Activated B cell treated with CpG ODN at 0.5 μM for 24 hours (primary cell): ENCODE measurements at regions of chr3 and their contacts with region 1.

Region 1: DNA sequence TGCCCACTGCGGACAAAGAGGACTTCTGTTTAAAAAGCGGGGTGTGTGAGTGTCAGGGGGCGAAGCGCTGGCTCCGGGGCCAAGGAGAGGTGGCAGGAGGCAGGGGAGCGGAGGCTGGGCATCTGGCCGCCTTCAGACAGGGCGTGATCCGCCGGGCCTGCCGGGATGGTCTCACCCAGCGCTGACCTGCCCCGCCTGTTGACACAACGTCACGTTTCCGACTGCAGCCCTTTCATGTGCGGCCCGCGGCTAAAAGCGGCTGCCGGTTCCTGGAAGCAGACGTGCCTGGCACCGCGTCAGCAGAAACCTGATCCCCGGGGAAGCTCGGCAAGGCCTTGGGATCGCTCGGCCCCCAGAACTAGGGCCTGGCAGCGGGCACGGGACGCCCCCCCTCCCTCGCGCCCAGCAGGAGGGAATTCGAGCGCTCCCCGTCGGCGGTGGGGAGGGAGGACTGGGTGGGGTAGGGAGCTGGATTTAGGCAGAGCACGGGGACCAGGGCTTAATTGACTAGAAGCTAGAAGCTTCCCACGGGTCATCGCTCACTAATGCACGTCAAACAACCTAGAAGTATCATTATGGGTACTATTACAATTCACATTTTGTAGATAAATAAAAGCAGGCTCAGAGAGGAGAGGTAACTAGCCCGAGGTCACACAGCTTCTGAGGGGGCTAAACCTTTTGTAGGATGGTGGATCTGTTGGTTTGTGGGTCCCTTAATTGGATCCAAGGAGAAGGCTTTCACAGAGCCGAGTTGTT is 7.7 kb downstream of the BHLHE40 start:
- DNase-seq: peak; percentile 64
- ATAC-seq: peak; percentile 33
- H3K4me3 Mint-ChIP-seq: peak overlapping the region; percentile 83
- H3K27ac Mint-ChIP-seq: peak overlapping the region; percentile 76
- H3K4me1 Mint-ChIP-seq: peaks cover 76% of the 10 kb centered on the region
- H3K27me3 Mint-ChIP-seq: no peaks in the 10 kb centered on the region
- CTCF ChIP-seq: no peak

Region 2: GRCh38 chr3:4303187-4304123 is 683.5 kb before region 1 on chr3 and contains the start of gene SETMAR:
- CTCF ChIA-PET with region 1: no interaction called
- POLR2A ChIA-PET with region 1: no interaction called
- intact Hi-C with region 1: loop called (anchors 10 kb)
- DNase-seq: peak; percentile 77
- ATAC-seq: peak; percentile 96
- H3K4me3 Mint-ChIP-seq: peak within 1 kb of the TSS; percentile 98
- H3K27ac Mint-ChIP-seq: peak within 1 kb of the TSS; percentile 98
- H3K4me1 Mint-ChIP-seq: peaks cover 11% of the 10 kb centered on the region
- H3K27me3 Mint-ChIP-seq: no peaks in the 10 kb centered on the region
- CTCF ChIP-seq: no peak
- total RNA-seq, gene SETMAR: 10.3 and 11.4 TPM in 2 replicates

Region 3: DNA sequence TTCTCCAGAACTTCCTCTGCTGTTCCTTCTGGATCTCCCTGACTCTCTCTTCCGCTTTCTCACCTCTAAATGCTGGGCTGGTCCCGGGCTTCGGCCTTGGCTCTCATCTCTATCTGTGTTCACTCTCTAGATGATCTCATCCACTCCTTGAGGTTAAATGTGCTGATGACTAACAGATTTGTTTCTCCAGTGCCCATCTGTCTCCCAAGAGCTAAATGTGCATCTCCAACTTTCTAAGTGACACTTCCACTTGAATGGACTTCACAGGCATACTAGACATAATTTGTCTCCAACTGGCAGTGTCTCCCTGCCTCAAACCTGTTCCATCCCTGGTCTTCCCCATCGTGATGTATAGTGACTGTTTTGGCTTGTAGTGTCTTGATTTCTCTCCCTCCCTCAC is 398.5 kb before region 1 on chr3:
- CTCF ChIA-PET with region 1: no interaction called
- POLR2A ChIA-PET with region 1: no interaction called
- intact Hi-C with region 1: no loop called
- DNase-seq: no peak
- ATAC-seq: no peak
- H3K4me3 Mint-ChIP-seq: no peak overlapping the region
- H3K27ac Mint-ChIP-seq: peak overlapping the region; percentile 36
- H3K4me1 Mint-ChIP-seq: peaks cover 82% of the 10 kb centered on the region
- H3K27me3 Mint-ChIP-seq: no peaks in the 10 kb centered on the region
- CTCF ChIP-seq: no peak

Region 4: GRCh38 chr3:4845882-4846281 is 141.1 kb before region 1 on chr3:
- CTCF ChIA-PET with region 1: interaction called, 3 read pairs
- POLR2A ChIA-PET with region 1: interaction called, 14 read pairs
- intact Hi-C with region 1: no loop called
- DNase-seq: no peak
- ATAC-seq: peak; percentile 66
- H3K4me3 Mint-ChIP-seq: peak overlapping the region; percentile 16
- H3K27ac Mint-ChIP-seq: peak overlapping the region; percentile 69
- H3K4me1 Mint-ChIP-seq: peaks cover 72% of the 10 kb centered on the region
- H3K27me3 Mint-ChIP-seq: no peaks in the 10 kb centered on the region
- CTCF ChIP-seq: no peak

Region 5: DNA sequence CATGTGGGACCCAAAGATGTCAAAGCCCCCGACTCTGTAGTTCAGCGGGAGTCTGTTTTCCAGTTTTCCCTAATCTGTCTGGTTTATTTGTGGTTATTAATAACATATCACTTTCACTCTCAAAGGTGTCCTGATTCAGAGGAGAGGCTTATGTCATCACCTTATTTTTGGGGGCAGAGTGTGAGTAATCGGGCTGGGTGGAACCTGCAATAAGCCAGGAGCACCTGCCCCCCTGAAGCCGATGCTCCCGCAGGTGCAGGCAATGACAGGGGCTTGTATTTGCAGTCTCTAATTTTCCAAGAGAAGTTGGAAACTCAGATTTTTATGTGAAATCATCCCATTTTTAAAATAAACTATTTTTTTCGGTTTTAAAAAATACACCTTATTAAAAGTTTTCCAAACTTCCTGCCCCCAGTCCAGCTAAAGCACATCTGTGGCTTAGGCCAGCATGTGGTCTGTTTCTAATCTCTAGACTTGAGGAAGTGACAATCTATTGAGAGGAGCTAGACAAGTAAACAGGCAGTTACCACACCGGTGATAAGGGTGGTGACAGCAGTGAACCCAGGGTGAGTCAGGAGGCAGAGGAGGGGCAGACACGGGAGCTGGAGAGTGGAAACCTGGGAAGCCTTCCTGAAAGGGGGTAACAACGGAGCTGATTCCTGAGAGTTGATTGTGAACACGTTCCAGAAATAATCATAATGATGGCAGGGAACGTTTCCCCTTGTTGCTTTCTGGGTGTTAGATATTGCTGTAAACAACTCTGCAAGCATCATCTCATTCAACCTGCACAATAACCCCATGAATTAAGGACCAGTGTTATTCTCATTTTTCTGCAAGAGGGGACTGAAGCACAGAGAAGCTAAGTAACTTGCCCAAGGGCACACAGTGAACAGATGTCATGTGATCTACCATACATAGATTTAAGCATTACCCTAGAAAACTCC is 29.5 kb after region 1 on chr3:
- CTCF ChIA-PET with region 1: interaction called, 65 read pairs
- POLR2A ChIA-PET with region 1: interaction called, 478 read pairs
- intact Hi-C with region 1: loop called (anchors 1 kb)
- DNase-seq: no peak
- ATAC-seq: peak; percentile 18
- H3K4me3 Mint-ChIP-seq: peak overlapping the region; percentile 16
- H3K27ac Mint-ChIP-seq: peak overlapping the region; percentile 66
- H3K4me1 Mint-ChIP-seq: peaks cover 86% of the 10 kb centered on the region
- H3K27me3 Mint-ChIP-seq: no peaks in the 10 kb centered on the region
- CTCF ChIP-seq: no peak

Region 6: GRCh38 chr3:5057857-5058324 is 70.9 kb after region 1 on chr3:
- CTCF ChIA-PET with region 1: interaction called, 8 read pairs
- POLR2A ChIA-PET with region 1: interaction called, 10 read pairs
- intact Hi-C with region 1: no loop called
- DNase-seq: peak; percentile 38
- ATAC-seq: peak; percentile 90
- H3K4me3 Mint-ChIP-seq: no peak overlapping the region
- H3K27ac Mint-ChIP-seq: peak overlapping the region; percentile 3
- H3K4me1 Mint-ChIP-seq: peaks cover 42% of the 10 kb centered on the region
- H3K27me3 Mint-ChIP-seq: no peaks in the 10 kb centered on the region
- CTCF ChIP-seq: peak; percentile 26